GM13977 (cell line): ENCODE measurements at regions of chr1 and their contacts with region 1.

Region 1: GRCh38 chr1:28877132-28877781 is 37.1 kb upstream of the EPB41 start:
- DNase-seq: peak; percentile 80
- CTCF ChIP-seq: peak; percentile 84

Region 2: GRCh38 chr1:27257155-27257554 is 1620.1 kb before region 1 on chr1:
- in situ Hi-C with region 1: no loop called
- DNase-seq: no peak
- CTCF ChIP-seq: no peak

Region 3: GRCh38 chr1:28642847-28643635 is 234.2 kb before region 1 on chr1 and contains the start of gene TAF12:
- in situ Hi-C with region 1: loop called (anchors 10 kb)
- DNase-seq: peak; percentile 89
- CTCF ChIP-seq: peak; percentile 56

Region 4: GRCh38 chr1:28779751-28780408 is 97.4 kb before region 1 on chr1:
- in situ Hi-C with region 1: loop called (anchors 10 kb)
- DNase-seq: no peak
- CTCF ChIP-seq: no peak

Region 5: GRCh38 chr1:29105839-29106238 is 228.6 kb after region 1 on chr1:
- in situ Hi-C with region 1: no loop called
- DNase-seq: no peak
- CTCF ChIP-seq: no peak